Left ventricle myocardium superior (tissue), 1 donor: ENCODE measurements at regions of chr12 and their contacts with region 1.

Region 1: GRCh38 chr12:3803865-3804472 is 51.1 kb upstream of the CRACR2A start:
- DNase-seq: peak; percentile 79
- ATAC-seq: peak; percentile 86

Region 2: DNA sequence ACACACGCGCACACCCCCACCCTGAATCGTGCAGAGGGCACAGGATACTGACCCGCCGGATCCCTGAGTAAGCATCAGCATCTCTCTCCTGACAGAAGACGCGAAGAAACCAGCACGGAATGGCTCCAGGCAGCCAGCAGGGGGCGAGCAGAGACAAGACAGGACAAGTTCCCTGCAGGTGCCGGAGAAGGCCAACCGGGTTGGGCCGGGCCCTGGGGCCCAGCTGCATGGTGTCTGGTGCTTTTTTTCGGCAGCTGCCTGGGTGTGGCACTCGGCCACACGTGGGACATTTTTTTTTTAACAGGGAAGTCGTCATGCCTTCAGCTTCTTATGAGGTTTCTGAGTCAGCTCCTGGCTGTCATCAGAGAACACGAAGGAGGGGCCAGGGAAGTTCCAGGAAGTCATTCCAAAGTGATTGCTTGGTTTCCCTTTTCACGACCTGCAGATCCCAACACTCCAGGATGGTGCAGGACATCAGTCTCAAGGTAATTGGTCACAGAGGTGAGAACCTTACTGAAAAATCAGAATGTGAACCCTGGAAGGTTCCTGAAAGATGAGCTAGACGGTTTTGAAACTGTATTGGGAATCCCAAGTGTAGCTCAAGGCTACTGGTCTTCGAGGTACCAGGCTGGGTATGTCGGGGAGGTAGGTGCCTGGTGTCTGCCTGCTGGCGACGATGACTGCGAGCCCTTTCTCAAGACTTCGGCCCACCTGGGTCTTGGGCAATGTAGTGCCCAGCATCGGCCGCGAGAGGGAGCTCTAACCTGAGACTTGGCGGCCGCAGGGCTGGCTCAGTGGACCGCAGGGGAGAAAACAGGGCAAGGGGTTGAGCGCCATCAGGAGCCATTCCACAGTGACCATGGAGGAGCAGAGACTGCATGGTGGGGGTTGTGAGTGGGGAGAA is 503.8 kb before region 1 on chr12:
- intact Hi-C with region 1: loop called (anchors 10 kb)
- DNase-seq: peak; percentile 92
- ATAC-seq: peak; percentile 81

Region 3: DNA sequence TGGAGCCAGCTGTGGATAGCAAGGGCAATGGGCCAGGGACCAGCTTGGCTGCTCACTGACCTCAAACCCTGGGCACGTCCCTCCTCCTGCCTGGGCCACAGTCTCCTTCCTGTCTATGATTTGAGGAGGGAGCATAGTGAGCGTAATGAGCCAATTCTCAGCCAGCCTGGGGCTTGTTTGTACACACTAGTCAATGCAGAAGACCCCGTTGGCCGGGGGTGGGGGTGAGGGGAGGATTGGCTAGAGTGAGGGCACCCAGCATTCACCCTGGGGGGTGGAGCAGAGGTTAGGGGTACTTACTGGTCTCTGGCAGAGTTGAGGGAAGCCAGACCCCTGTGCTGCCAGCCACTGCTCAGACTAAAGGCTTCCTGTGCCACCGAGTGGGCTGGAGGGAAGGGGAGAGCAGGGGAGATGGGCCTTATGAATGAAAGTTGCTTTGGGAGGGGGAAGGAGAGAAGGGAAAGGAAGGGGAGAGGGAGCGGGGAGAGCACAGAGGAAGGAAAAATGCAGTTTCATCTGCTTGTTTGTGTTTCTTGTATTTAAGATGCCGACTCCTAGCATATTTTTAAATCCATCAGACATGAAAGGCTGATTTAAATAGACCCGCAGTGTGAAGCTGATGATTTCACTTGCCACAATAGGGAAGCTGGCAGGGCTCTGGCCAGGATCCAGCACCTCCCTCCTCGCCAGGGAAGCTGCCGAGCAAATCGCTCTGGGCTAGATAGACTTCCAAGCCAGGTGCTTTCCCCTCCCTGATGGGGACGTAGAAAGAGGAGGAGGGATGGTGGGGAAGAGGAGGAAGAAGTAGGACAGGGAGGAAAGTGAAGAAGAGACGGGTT is 199.0 kb before region 1 on chr12:
- intact Hi-C with region 1: no loop called
- DNase-seq: peak; percentile 87
- ATAC-seq: peak; percentile 84